Heart right ventricle (tissue), 16 donors: ENCODE measurements at regions of chr2 and their contacts with region 1.

Region 1: DNA sequence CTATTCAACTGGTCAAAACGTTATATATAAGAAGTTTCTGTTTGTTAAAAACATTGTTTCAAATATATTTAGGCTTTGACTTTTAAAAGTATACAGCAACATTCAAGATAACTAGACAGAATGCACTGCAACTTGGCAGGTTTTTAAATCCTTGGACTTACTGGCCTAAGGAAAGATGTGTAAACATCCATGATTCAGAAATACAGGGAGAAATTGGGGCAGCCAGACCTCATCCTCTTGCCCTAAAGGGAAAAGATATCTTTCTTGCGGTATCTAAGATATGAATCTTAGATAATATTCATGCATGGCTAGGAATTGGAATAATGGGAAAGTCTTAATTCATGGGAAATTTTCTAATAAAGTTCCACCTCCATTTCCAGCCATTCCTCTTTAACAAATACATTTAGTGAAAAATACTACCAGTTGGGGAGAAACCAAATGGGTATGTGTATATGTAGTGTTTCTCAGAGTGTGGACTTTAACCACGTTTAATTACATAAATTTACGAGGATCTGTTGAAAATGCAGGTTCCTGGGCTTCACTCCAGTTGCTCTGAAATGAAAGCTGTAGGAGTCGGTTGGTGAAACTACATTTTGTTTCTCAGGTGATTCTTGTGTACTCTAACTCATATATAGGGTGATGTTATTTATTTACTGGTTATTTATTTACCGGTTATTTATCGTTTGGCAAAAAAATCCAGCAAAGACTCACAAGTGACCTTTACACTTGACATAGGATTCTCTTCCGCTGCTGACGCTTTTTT is 584 bp upstream of the TANK start:
- DNase-seq: no peak
- ATAC-seq: no peak
- H3K4me3 ChIP-seq: peak overlapping the region in 9 of 10 donors; percentile 60 to 92 (median 82)
- H3K27ac ChIP-seq: peak overlapping the region in 9 of 10 donors; percentile 82 to 97 (median 90)
- H3K4me1 ChIP-seq: peaks cover 2 to 45% (median 30%) of the 10 kb centered on the region in 9 donors
- H3K27me3 ChIP-seq: no peaks in the 10 kb centered on the region
- CTCF ChIP-seq: no peak

Region 2: GRCh38 chr2:161028581-161028980 is 131.1 kb before region 1 on chr2:
- intact Hi-C with region 1: no loop called
- DNase-seq: no peak
- ATAC-seq: no peak
- H3K4me3 ChIP-seq: no peak overlapping the region
- H3K27ac ChIP-seq: no peak overlapping the region
- H3K4me1 ChIP-seq: no peaks in the 10 kb centered on the region
- H3K27me3 ChIP-seq: no peaks in the 10 kb centered on the region
- CTCF ChIP-seq: no peak

Region 3: DNA sequence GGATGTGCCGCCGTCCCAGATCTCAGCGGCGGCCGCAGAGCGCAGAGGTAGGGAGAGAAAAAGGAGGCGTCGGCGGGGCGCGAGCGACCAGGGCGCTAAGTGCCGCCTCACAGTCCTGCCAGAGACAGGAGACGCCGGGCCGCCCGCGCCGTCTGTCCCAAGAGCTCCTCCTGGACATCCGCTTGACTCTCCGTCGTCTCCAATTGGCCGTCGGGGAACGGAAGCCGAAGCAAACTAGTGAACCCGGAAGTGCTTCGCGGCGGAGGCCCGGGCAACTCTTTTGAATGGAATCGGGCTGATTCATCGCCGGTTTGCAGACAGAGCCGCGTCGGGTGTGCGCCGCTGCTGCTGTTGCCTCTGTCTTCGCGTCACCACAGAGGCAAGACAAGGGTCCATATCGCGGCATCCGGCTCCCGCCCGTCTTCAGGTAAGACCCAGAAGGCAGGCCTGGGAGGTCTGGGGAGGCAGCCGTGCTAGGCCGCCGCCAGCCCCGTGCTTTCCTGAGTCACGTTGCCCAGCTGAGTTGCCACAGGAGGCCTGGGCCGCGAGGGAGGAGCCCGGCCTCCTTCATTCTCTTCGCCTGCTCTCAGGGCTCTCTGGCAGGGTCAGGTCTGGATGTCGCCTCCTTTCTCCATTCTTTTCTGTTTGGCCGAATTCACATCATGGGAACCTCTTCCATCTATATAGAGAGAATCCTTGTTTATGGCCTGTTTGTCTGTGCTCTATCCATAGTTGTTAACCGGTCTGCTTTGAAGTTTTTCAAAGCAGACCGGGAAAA is 148.7 kb after region 1 on chr2 and contains the start of gene PSMD14:
- intact Hi-C with region 1: loop called in 1 of 10 experiments (anchors 2 kb)
- DNase-seq: peak; percentile 89 to 92
- ATAC-seq: peak; percentile 97 to 99 (median 99)
- H3K4me3 ChIP-seq: peak within 1 kb of the TSS; percentile 62 to 91 (median 79)
- H3K27ac ChIP-seq: peak within 1 kb of the TSS; percentile 23 to 95 (median 84)
- H3K4me1 ChIP-seq: peaks cover 0 to 39% (median 14%) of the 10 kb centered on the region in 9 donors
- H3K27me3 ChIP-seq: no peaks in the 10 kb centered on the region
- CTCF ChIP-seq: no peak
- total RNA-seq, gene PSMD14: 35.5 to 57.3 (median 44.4) TPM